ENCODE measurements at regions of chr11 and their contacts with region 1.

Region 1: DNA sequence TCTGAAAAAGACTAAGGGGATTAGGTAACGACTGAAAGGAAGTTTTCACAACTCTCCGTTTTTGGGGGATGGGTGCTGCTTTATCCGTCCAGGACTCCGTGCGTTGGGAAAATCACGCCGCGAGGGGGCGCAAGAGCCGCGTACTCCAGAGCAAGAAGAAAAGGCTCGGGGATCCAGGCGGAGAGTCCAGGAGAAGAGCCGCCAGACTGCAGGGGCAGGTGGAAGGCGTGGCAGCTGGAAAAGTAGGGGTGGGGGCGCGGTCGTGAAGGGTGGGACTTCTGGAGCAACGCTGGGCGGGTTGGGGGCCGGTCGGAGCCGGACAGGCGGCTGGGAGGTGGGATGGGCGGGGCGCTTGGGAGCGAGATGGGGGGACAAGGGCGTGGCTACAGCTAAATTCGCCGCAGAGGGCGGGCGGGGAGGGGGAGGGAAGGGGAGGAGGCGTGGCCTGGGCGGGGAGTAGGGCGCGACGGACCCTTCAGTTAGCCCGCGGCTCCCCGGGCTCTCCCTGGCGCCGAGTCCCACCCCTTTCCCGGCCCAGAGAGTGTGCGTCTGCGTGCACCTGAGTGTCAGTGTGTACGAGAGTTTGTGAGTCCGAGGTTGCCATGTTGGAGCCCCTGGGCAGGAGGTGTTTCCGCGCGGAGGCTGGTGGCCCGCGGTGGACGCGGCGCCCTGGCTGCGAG is 613 bp upstream of the ARHGEF17 start:
- DNase-seq: peak; percentile 99
- ATAC-seq: peak; percentile 78
- H3K4me3 Mint-ChIP-seq: peak overlapping the region; percentile 76
- H3K27ac Mint-ChIP-seq: peak overlapping the region; percentile 85
- H3K4me1 Mint-ChIP-seq: peaks cover 16% of the 10 kb centered on the region
- H3K27me3 Mint-ChIP-seq: peaks cover 39% of the 10 kb centered on the region
- CTCF ChIP-seq: peak; percentile 57

Region 2: GRCh38 chr11:73198677-73199076 is 108.8 kb before region 1 on chr11:
- CTCF ChIA-PET with region 1: no interaction called
- POLR2A ChIA-PET with region 1: no interaction called
- DNase-seq: peak; percentile 4
- ATAC-seq: no peak
- H3K4me3 Mint-ChIP-seq: no peak overlapping the region
- H3K27ac Mint-ChIP-seq: no peak overlapping the region
- H3K4me1 Mint-ChIP-seq: peaks cover 27% of the 10 kb centered on the region
- H3K27me3 Mint-ChIP-seq: no peaks in the 10 kb centered on the region; the same call in 1 of the 2 replicates
- CTCF ChIP-seq: no peak

Region 3: DNA sequence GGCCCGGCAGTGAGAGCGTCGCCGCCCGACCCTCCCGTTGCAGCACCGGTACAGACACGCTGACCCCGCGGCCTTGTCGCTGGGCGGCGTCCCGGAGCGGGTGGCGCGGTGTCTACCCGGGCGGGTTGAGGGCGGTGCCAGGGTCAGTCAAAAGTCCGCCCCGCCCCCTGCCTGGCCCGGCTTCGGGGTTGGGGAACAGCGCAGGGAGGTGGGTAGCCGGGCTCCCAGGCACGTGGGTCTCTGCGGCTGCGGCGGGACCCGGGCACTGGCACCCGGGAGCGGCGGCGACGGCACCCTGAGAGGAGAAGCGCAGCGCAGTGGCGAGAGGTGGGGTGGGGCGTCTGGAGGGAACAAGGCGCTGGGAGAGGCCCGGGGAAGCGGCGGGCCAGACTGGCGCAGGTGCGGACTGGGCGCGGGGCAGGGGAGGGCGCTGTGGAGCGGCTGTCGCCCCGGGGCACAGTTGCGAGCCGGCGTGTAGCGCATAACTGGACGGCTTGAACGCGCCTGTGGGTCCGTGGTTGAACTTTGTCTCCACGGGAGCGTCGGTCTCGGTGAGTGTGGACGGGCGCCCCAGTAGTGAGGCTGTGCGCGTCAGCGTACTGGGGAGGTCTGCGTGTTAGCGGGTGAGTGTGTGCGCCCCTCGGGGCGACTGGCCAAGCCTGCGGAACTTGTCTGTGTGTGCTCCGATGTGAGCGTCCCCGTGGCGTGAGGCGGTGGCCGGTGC is 89.2 kb before region 1 on chr11 and contains the start of gene P2RY2:
- CTCF ChIA-PET with region 1: no interaction called
- POLR2A ChIA-PET with region 1: no interaction called
- DNase-seq: peak; percentile 80
- ATAC-seq: peak; percentile 88
- H3K4me3 Mint-ChIP-seq: peak within 1 kb of the TSS; percentile 78
- H3K27ac Mint-ChIP-seq: no peak within 1 kb of the TSS
- H3K4me1 Mint-ChIP-seq: peaks cover 8% of the 10 kb centered on the region
- H3K27me3 Mint-ChIP-seq: peaks cover 58% of the 10 kb centered on the region
- CTCF ChIP-seq: no peak
- total RNA-seq, gene P2RY2: 0.94 to 1.2 TPM (median 1.2 TPM) in 3 replicates

Region 4: DNA sequence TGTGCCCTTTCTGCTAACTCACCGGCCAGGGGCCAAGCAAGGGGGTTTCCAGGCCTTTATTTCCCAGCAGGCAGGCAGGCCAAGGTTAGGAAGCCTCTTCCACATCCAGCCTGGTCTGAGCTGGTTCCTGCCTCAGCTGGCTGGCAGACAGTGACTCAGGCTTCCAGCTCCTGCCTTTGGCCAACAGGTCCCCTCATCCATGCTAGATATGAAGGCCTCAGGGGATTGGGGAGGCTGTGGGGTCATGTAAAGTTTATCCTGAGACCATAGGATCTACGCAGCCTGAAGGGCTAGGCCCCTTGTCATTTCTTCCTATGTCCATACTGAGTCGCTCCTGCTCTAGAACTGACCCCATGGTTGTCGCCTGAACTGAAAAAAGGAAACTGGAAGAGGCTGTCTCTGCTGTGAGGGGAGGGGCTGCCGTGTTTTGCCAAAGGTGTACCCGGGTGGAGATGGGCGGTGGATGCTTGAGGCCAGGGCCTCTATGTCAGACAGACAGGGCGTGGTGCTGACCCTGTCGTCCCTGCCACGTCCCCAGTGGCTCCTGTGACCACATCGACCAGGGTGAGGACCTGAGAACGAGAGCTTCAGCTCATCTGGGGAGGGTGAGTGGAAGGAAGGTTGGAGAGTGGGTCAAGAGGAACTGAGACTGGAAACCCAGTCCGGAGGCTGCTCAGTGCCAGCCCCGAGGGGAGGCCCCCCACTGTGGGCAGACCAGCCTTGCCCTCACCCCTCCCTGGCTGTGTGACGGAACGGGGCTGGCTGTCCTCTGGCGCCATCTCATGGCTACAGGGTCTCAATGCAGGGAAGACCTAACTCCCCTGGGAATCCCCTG is 18.4 kb before region 1 on chr11:
- CTCF ChIA-PET with region 1: interaction called, 20 read pairs
- POLR2A ChIA-PET with region 1: no interaction called
- DNase-seq: peak; percentile 85
- ATAC-seq: peak; percentile 85
- H3K4me3 Mint-ChIP-seq: no peak overlapping the region
- H3K27ac Mint-ChIP-seq: no peak overlapping the region
- H3K4me1 Mint-ChIP-seq: peaks cover 9% of the 10 kb centered on the region
- H3K27me3 Mint-ChIP-seq: peaks cover 9% of the 10 kb centered on the region
- CTCF ChIP-seq: peak; percentile 81

Region 5: DNA sequence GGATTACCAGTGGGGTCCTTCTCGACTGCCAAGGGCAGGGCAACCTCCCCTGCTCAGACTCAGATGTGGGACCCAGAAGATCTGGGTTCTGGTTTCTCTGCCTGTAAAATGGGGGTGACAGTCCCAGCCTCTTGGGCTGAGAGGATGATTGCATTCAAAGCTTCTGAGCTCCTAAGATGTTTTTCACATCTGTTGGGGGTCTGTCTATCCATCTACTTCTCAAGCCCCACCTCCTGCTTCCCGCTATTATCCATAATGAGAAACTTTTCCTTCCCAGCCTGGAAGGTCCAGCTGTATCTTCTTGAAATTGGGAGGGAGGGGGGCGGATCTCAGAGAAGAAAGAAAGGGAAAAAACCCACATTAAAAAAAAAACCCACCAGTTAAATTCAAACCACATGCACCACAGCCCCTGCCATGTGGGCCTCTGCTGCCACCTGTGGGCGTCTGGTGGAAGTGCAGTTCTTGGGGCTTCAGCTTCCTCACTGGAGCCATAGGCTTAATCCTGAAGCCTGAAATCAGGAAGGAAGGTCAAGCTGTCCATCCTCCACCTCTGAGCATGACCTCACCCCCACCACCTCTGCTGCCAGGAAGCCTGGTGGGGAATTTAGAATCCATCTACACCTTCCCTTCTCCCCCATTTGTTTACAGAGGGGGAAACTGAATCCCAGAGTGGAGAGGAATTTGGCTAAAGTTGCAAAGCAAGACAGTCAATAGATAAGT is 27.9 kb after region 1 on chr11:
- CTCF ChIA-PET with region 1: interaction called, 270 read pairs
- POLR2A ChIA-PET with region 1: interaction called, 23 read pairs
- DNase-seq: peak; percentile 94
- ATAC-seq: peak; percentile 38
- H3K4me3 Mint-ChIP-seq: no peak overlapping the region
- H3K27ac Mint-ChIP-seq: no peak overlapping the region
- H3K4me1 Mint-ChIP-seq: peaks cover 50% of the 10 kb centered on the region
- H3K27me3 Mint-ChIP-seq: peaks cover 64% of the 10 kb centered on the region
- CTCF ChIP-seq: peak; percentile 95

Region 6: DNA sequence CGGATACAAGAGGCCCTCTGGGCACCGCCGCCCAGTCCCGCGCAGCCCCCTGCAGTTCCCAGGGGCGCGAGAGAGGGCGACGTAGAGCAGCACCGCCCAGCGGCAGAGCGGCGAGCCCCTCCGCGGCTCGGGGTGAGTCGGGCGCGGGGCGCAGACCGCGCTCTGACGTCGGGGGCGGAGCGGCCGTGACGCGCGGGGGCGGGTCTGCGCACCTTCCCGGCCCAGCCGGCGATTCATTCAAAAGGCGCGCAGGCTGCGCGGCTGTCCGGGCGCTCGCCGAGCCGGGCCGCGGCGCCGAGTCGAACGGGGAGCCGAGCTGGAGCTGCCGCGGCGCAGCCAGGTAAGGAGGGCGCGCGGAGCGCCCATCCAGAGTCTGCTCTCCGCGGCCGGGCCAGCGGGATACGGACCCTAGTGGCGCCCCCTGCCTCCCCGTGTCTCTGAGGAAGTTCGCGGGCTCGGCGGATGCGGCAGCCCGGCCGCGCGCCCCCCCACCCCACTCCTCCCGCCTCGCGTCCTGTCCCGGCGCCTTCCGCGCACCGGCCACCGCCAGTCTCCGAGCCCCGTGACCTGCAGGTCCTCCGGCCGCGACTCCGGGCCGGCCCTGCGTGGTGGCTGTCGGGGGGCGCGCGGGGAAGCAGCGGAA is 68.8 kb after region 1 on chr11 and contains the start of gene RELT:
- CTCF ChIA-PET with region 1: interaction called, 13 read pairs
- POLR2A ChIA-PET with region 1: interaction called, 3 read pairs
- DNase-seq: peak; percentile 93
- ATAC-seq: peak; percentile 95
- H3K4me3 Mint-ChIP-seq: peak within 1 kb of the TSS; percentile 70
- H3K27ac Mint-ChIP-seq: no peak within 1 kb of the TSS
- H3K4me1 Mint-ChIP-seq: peaks cover 12% of the 10 kb centered on the region
- H3K27me3 Mint-ChIP-seq: peaks cover 16% of the 10 kb centered on the region
- CTCF ChIP-seq: peak; percentile 71
- total RNA-seq, gene RELT: 5.7 to 6.7 TPM (median 5.9 TPM) in 3 replicates

Region 7: DNA sequence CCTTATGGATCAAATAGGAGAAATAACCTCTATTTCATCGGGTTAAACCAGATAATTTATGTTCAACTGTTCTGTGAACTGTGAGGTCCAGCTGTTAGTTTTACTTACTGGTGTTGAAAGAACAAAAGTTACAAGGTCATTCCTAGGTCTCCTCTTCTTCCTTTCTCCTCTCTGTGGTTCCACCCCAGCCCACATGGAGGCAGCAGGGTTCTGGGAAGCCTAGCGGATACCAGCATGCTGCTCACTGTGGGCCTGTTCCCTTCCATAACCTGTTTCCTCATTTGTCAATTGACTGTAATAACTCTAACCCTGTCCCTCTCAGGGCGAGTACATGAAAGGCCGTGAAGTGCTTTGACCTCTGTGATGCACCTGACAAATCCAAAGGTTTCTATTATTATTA is 96.6 kb after region 1 on chr11:
- CTCF ChIA-PET with region 1: interaction called, 13 read pairs
- POLR2A ChIA-PET with region 1: no interaction called
- DNase-seq: peak; percentile 66
- ATAC-seq: peak; percentile 91
- H3K4me3 Mint-ChIP-seq: no peak overlapping the region
- H3K27ac Mint-ChIP-seq: no peak overlapping the region
- H3K4me1 Mint-ChIP-seq: peaks cover 6% of the 10 kb centered on the region
- H3K27me3 Mint-ChIP-seq: no peaks in the 10 kb centered on the region
- CTCF ChIP-seq: no peak